Ovary (tissue), 10 donors: ENCODE measurements at regions of chr12 and their contacts with region 1.

Region 1: GRCh38 chr12:19643635-19644034 is 204.3 kb downstream of the AEBP2 start:
- DNase-seq: peak in 2 of 5 donors; percentile 20 to 39
- H3K4me3 ChIP-seq: no peak overlapping the region
- H3K27ac ChIP-seq: no peak overlapping the region
- H3K4me1 ChIP-seq: no peaks in the 10 kb centered on the region
- H3K27me3 ChIP-seq: no peaks in the 10 kb centered on the region
- CTCF ChIP-seq: peak; percentile 35 to 60 (median 49)
- EP300 ChIP-seq: no peak
- POLR2A ChIP-seq: no peak

Region 2: GRCh38 chr12:19451196-19451595 is 192.4 kb before region 1 on chr12:
- intact Hi-C with region 1: no loop called
- DNase-seq: no peak
- H3K4me3 ChIP-seq: no peak overlapping the region
- H3K27ac ChIP-seq: no peak overlapping the region
- H3K4me1 ChIP-seq: peaks cover 5% of the 10 kb centered on the region
- H3K27me3 ChIP-seq: no peaks in the 10 kb centered on the region
- CTCF ChIP-seq: no peak
- EP300 ChIP-seq: no peak
- POLR2A ChIP-seq: no peak

Region 3: DNA sequence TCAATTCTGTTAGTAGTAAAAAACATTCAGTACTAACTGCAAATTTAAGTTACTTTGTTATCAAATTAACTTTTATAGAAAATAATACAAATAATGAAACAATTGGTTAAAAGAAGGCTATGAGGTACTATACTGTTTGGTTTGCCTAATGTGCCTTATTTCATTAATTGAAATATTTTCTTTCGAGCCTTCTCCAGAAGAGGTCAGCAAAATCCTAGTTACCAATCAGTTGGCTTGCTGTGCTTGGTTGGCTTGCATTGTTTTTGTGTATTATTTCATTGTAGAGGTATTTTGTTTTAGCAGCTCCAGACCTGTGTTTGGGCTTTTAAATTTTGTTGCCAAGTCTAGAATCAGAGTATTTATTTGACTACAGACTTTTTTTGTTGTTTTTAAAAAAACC is 135.8 kb before region 1 on chr12:
- intact Hi-C with region 1: loop called in 3 of 4 experiments (anchors 5 to 10 kb)
- DNase-seq: no peak
- H3K4me3 ChIP-seq: no peak overlapping the region
- H3K27ac ChIP-seq: no peak overlapping the region
- H3K4me1 ChIP-seq: peaks cover 10% of the 10 kb centered on the region
- H3K27me3 ChIP-seq: no peaks in the 10 kb centered on the region
- CTCF ChIP-seq: peak; percentile 11 to 37 (median 24)
- EP300 ChIP-seq: no peak
- POLR2A ChIP-seq: no peak

Region 4: DNA sequence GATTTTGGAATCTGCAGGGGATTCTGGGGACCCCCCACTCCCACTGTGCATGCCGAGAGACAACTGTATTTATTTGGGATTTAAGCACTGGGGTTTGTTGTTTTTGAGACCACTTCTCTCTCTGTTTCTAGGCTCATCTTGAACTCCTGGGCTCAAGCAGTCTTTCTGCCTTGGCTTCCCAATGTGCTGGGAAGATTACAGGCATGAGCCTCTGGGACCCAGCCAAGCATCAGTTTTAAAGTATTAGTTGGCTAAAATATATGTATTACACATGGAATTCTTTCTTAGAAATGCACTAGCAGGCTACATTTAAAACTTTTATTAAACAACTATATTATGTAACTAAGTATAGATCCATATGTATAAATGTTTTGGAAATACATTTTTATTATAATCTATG is 126.1 kb before region 1 on chr12:
- intact Hi-C with region 1: loop called in 1 of 4 experiments (anchors 10 kb)
- DNase-seq: no peak
- H3K4me3 ChIP-seq: no peak overlapping the region
- H3K27ac ChIP-seq: no peak overlapping the region
- H3K4me1 ChIP-seq: no peaks in the 10 kb centered on the region
- H3K27me3 ChIP-seq: no peaks in the 10 kb centered on the region
- CTCF ChIP-seq: no peak
- EP300 ChIP-seq: no peak
- POLR2A ChIP-seq: no peak